ENCODE measurements at regions of chr5 and their contacts with region 1.

Region 1: GRCh38 chr5:111954516-111955395 is 197.8 kb upstream of the NREP start:
- DNase-seq: peak; percentile 13
- ATAC-seq: no peak
- H3K4me3 ChIP-seq: no peak overlapping the region
- H3K27ac ChIP-seq: no peak overlapping the region
- H3K4me1 ChIP-seq: no peaks in the 10 kb centered on the region
- H3K27me3 ChIP-seq: no peaks in the 10 kb centered on the region
- CTCF ChIP-seq: no peak

Region 2: GRCh38 chr5:111901296-111901695 is 53.5 kb before region 1 on chr5:
- CTCF ChIA-PET with region 1: no interaction called
- POLR2A ChIA-PET with region 1: no interaction called
- intact Hi-C with region 1: loop called (anchors 5 kb)
- DNase-seq: no peak
- ATAC-seq: no peak
- H3K4me3 ChIP-seq: no peak overlapping the region
- H3K27ac ChIP-seq: no peak overlapping the region
- H3K4me1 ChIP-seq: no peaks in the 10 kb centered on the region
- H3K27me3 ChIP-seq: no peaks in the 10 kb centered on the region
- CTCF ChIP-seq: no peak